A673 (cell line): ENCODE measurements at regions of chr14 and their contacts with region 1.

Region 1: DNA sequence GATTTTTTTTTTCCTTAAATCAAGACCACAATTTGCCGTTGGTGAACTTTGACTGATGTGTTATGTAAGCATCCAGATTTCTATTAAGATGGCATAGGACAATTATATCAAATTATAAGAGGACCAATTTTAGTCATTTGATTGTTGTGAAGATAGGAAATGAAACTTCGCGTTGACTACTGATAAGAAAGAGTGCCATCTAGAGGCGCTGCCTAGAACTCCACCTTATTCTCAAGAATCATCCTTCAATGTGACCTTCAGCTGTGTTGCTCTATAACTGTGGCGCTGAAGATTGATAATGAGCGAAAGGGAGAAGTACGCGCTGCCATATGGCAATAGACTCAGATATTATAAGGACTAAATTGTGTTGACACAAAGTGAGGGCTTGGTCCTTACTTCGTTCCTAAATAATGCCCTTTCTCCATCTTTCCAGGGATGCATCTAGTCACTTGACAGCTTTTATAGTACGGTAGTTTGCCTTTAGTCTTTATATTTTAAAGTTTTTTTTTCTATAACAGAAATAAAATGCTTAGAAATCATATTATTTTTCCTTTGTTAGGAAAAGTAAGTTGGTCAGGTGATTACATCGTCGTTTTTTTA is 350.8 kb upstream of the STXBP6 start:
- DNase-seq: peak; percentile 79
- H3K4me3 ChIP-seq: no peak overlapping the region
- H3K27ac ChIP-seq: no peak overlapping the region
- H3K4me1 ChIP-seq: peaks cover 31% of the 10 kb centered on the region
- H3K27me3 ChIP-seq: peaks cover 8% of the 10 kb centered on the region
- CTCF ChIP-seq: peak; percentile 87

Region 2: DNA sequence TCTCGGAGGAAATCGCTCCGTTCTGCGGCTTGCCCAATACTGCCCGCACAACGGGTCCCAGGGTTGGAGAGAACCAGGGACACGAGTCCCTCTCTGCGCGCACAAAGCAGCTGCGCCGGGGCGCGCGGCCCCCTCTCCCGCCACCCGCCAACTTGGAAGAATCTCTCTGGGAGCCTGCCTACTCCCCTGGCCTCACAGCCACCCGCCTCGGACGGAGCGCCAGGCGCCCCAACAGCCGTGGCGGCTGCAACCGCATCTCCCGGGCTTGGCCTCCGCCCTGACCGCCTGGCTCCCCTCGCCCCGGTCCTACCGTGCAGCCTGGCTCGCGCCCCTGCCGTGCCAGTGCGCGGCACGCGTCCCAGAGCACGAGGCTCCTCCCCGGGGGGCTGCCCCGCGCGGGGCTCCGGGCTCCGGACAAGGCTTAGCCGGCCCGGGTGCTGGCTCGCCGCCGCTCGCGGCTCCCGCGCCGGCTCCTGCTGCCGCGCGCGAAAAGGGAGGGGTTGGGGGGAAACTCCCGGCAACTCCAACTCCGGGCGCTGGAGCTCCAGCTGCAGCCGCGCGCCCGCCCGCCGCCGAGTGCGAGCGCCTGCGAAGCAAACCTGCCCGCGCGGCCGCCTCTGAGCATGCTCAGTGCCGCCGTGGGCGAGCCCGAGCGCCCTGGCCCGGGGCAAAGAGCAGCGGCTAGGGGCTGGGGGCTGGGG is 351.0 kb before region 1 on chr14 and contains the start of gene STXBP6:
- CTCF ChIA-PET with region 1: no interaction called
- POLR2A ChIA-PET with region 1: no interaction called
- intact Hi-C with region 1: loop called (anchors 5 kb)
- DNase-seq: peak; percentile 72
- H3K4me3 ChIP-seq: peak within 1 kb of the TSS; percentile 49
- H3K27ac ChIP-seq: no peak within 1 kb of the TSS
- H3K4me1 ChIP-seq: no peaks in the 10 kb centered on the region
- H3K27me3 ChIP-seq: peaks cover 77% of the 10 kb centered on the region
- CTCF ChIP-seq: no peak
- total RNA-seq, gene STXBP6: 5.3 and 6.2 TPM in 2 replicates

Region 3: DNA sequence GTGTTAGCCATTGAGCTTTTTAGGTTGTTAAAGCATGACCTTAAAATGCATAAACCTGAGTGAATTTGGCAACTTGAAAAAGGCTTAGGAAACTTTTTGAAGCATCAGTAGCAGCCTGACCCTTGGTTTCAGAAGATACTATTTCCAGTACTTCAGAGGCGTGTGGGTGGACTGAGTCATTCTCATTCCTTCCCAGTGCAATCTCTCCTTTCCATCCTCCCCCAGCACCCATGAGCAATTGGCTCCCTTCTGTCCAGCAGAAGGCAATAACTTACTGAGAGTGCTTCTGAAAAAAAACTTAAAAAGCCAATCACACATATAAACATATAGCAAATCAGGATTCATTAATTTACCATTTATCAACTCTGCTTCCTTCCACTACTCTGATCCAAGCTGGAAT is 51.4 kb before region 1 on chr14:
- CTCF ChIA-PET with region 1: no interaction called
- POLR2A ChIA-PET with region 1: no interaction called
- intact Hi-C with region 1: no loop called
- DNase-seq: no peak
- H3K4me3 ChIP-seq: no peak overlapping the region
- H3K27ac ChIP-seq: no peak overlapping the region
- H3K4me1 ChIP-seq: no peaks in the 10 kb centered on the region
- H3K27me3 ChIP-seq: no peaks in the 10 kb centered on the region
- CTCF ChIP-seq: no peak